T-cell (primary cell): ENCODE measurements at regions of chr17 and their contacts with region 1.

Region 1: DNA sequence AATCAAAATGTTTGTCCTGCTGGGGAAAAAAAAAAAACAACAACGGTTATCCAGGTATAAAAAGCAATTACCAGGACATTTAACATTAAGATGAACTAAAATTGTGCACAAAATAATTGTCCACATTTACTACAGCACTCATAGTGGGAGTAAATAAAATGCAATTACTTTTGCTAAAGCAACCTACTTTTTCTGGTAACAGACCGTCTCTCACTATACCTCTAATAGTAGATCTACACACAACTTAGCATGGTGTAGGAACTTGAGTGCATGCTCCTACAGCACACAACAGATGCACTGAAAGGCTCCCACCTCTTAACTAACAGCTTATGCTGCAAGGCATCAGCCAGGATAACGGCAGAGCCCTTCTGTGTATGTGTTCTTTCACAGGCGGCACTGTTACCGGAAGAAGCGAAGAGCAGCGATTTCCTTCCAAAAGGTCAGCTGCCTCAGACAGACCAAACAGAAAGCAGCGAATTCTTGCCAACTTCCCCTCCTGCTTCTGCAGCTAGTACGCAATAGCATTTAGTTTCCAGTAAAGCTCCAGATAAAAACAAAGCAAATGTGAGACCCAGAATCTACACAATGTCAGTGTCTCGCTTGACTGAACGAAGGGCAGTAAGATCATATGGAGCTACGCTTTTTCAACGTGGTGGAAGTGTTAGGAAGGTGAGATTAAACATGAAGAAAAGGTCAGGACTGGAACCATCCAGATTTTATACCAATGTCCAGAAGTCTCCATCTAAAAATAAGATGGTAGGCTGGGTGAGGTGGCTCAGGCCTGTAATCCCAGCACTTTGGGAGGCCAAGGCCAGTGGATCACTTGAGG is 27.6 kb downstream of the STAT5B start:
- DNase-seq: peak; percentile 51 to 95 (median 86)
- ATAC-seq: peak; percentile 90 to 96 (median 92)
- H3K4me3 ChIP-seq: peak overlapping the region; percentile 44 to 63
- H3K4me3 Mint-ChIP-seq: peak overlapping the region; percentile 76 to 86 (median 81)
- H3K27ac ChIP-seq: peak overlapping the region; percentile 91
- H3K27ac Mint-ChIP-seq: peak overlapping the region; percentile 97 to 99
- H3K4me1 ChIP-seq: peaks cover 46 to 50% of the 10 kb centered on the region in 2 experiments
- H3K4me1 Mint-ChIP-seq: peaks cover 74 to 79% (median 78%) of the 10 kb centered on the region in 3 donors
- H3K27me3 ChIP-seq: no peaks in the 10 kb centered on the region
- H3K27me3 Mint-ChIP-seq: no peaks in the 10 kb centered on the region

Region 2: DNA sequence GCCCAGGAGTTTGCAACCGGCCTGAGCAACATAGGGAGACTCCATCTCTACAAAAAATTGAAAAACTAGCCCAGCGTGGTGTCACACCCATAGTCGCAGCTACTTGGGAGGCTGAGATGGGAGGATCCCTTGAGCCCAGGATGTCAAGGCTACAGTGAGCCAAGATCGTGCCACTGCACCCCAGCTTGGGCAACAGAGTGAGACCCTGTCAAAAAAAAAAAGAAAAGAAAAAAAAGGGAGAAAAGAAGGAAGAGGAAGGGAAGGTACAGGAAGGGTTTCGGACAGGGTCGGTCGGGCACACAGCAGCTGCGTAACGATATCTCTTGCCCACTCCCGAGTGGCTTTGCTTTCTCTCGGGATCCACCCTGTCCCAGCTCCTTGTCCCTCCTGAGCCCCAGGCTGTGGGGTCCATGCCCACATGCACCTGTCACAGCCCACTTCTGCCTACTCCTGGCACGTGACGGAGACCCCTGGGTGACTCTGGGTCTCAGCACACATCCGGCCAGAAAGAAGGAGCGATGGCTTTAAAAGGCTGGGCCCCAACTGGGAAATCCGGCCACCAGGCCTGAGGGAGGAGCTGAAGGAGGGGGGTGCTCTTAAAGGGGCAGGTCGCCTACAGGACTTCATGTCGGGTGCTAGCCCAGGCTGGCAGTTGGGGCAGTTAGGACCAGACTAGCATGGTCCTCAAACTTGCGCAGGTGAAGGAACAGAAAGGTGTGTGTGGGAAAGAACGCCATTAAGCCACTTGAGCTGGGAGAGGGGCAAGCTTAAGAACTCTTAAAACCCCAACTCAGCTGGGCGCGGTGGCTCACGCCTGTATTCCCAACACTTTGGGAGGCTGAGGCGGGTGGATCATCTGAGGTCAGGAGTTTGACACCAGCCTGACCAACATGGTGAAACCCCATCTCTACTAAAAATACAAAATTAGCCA is 54.3 kb before region 1 on chr17 and contains the start of gene GHDC:
- CTCF ChIA-PET with region 1: interaction called in 1 of 2 experiments, 3 read pairs
- POLR2A ChIA-PET with region 1: interaction called in 1 of 2 experiments, 10 read pairs
- DNase-seq: peak; percentile 57 to 82 (median 69)
- ATAC-seq: peak; percentile 90 to 98 (median 94)
- H3K4me3 ChIP-seq: peak within 1 kb of the TSS; percentile 94 to 97
- H3K4me3 Mint-ChIP-seq: peak within 1 kb of the TSS; percentile 94 to 95 (median 94)
- H3K27ac ChIP-seq: peak within 1 kb of the TSS; percentile 69
- H3K27ac Mint-ChIP-seq: peak within 1 kb of the TSS; percentile 91 to 92
- H3K4me1 ChIP-seq: peaks cover 2 to 29% of the 10 kb centered on the region in 2 experiments
- H3K4me1 Mint-ChIP-seq: peaks cover 26 to 31% (median 31%) of the 10 kb centered on the region in 3 donors
- H3K27me3 ChIP-seq: no peaks in the 10 kb centered on the region
- H3K27me3 Mint-ChIP-seq: no peaks in the 10 kb centered on the region
- total RNA-seq, gene GHDC: 15.8 to 26.2 (median 22.5) TPM

Region 3: DNA sequence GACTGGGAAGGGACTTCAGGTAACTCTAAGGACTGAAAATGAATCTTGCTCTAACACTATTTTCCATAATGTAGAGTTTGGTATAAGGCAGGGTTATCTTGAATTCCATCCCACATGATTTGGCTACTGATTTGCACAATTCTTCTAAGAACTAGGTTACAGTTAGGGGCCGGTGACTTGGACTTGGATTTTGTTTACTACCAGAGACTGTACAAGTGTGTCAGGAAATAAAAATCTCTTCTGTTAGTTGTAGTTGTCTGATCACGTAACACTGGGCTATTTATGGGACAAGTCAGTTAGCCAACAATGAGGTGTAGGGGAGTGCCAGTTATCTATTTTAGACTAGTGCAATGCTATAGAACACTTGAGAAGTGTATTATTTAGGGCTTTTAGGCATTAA is 14.6 kb before region 1 on chr17:
- CTCF ChIA-PET with region 1: interaction called in 1 of 2 experiments, 7 read pairs
- POLR2A ChIA-PET with region 1: interaction called, 3 to 11 read pairs
- DNase-seq: no peak
- ATAC-seq: no peak
- H3K4me3 ChIP-seq: no peak overlapping the region
- H3K4me3 Mint-ChIP-seq: no peak overlapping the region
- H3K27ac ChIP-seq: no peak overlapping the region
- H3K27ac Mint-ChIP-seq: peak overlapping the region; percentile 60 to 69
- H3K4me1 ChIP-seq: peaks cover 0 to 13% of the 10 kb centered on the region in 2 experiments
- H3K4me1 Mint-ChIP-seq: peaks cover 45 to 53% (median 53%) of the 10 kb centered on the region in 3 donors
- H3K27me3 ChIP-seq: no peaks in the 10 kb centered on the region
- H3K27me3 Mint-ChIP-seq: no peaks in the 10 kb centered on the region

Region 4: DNA sequence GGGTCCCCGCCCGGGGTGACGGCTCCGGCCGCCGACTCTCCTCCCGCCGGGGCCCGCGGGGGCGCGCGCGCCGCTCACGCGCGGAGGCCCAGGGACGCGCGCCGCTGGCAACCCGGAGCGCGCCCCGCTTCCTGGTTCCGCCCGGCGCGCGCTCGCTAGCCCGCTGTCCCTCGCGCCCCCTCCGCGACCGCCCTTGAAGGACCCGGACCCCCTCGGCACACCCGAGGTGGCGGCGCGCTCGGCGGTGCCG is 27.7 kb after region 1 on chr17 and contains the start of gene STAT5B:
- CTCF ChIA-PET with region 1: interaction called in 1 of 2 experiments, 19 read pairs
- POLR2A ChIA-PET with region 1: interaction called, 24 to 147 read pairs
- DNase-seq: peak; percentile 26 to 85 (median 55)
- ATAC-seq: peak; percentile 51 to 75 (median 72)
- H3K4me3 ChIP-seq: peak within 1 kb of the TSS; percentile 84 to 92
- H3K4me3 Mint-ChIP-seq: peak within 1 kb of the TSS; percentile 95 to 100 (median 96)
- H3K27ac ChIP-seq: peak within 1 kb of the TSS; percentile 87
- H3K27ac Mint-ChIP-seq: peak within 1 kb of the TSS; percentile 95 to 98
- H3K4me1 ChIP-seq: peaks cover 12 to 27% of the 10 kb centered on the region in 2 experiments
- H3K4me1 Mint-ChIP-seq: peaks cover 45 to 59% (median 48%) of the 10 kb centered on the region in 3 donors
- H3K27me3 ChIP-seq: no peaks in the 10 kb centered on the region
- H3K27me3 Mint-ChIP-seq: no peaks in the 10 kb centered on the region
- total RNA-seq, gene STAT5B: 178 to 205 (median 186) TPM

Region 5: DNA sequence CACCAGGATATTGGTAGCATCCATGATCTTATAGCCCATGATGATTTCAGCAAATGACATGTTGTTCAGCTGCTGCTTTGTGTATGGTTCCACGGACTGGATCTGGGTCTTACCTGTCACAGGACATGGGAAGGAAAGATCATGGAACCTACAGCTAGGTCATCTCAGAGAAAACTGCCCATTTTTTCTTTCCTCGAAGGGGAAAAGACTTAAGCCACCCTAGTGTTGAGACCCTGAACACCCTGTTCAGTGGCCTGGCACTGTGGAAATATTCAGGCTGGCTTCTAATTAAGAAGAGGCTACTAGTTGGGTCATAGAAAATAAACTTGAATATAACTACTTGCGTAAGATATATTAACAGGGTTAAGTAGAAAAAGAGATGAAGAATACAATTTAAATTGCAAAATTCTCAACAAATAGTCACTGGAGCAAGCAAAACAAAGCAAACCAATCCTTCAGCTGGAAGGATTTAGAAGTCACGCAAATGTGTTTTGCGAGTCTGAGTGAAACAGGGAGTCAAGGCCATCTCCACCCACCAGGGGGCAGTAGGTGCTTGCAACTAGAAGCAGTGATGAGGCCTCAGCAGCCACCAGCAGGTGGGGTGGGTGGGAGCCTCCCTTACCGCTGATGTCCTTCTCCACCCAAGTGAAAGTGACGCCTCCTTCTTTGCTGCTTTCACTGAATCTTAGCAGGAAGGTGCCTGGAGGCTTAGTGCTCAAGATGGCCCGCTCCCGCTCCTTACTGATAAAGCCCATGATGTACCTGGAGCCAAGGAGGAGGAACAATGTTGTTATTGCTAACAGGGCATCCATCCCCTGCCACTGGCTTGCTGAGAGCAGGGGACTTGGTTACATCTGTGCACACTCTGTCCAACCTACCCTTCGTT is 74.1 kb after region 1 on chr17:
- CTCF ChIA-PET with region 1: no interaction called
- POLR2A ChIA-PET with region 1: no interaction called
- DNase-seq: peak; percentile 87 to 98 (median 94)
- ATAC-seq: peak; percentile 91 to 97 (median 94)
- H3K4me3 ChIP-seq: no peak overlapping the region
- H3K4me3 Mint-ChIP-seq: no peak overlapping the region
- H3K27ac ChIP-seq: peak overlapping the region; percentile 13
- H3K27ac Mint-ChIP-seq: peak overlapping the region; percentile 82 to 83
- H3K4me1 ChIP-seq: peaks cover 15 to 28% of the 10 kb centered on the region in 2 experiments
- H3K4me1 Mint-ChIP-seq: peaks cover 41 to 44% (median 43%) of the 10 kb centered on the region in 3 donors
- H3K27me3 ChIP-seq: no peaks in the 10 kb centered on the region
- H3K27me3 Mint-ChIP-seq: no peaks in the 10 kb centered on the region

Region 6: GRCh38 chr17:42388381-42389134 is 140.0 kb after region 1 on chr17 and contains the start of gene STAT3:
- CTCF ChIA-PET with region 1: no interaction called
- POLR2A ChIA-PET with region 1: interaction called in 1 of 2 experiments, 14 read pairs
- DNase-seq: peak; percentile 99 to 100 (median 100)
- ATAC-seq: peak; percentile 83 to 93 (median 92)
- H3K4me3 ChIP-seq: peak within 1 kb of the TSS; percentile 75 to 81
- H3K4me3 Mint-ChIP-seq: peak within 1 kb of the TSS; percentile 90 to 95 (median 94)
- H3K27ac ChIP-seq: peak within 1 kb of the TSS; percentile 98
- H3K27ac Mint-ChIP-seq: peak within 1 kb of the TSS; percentile 100
- H3K4me1 ChIP-seq: peaks cover 13 to 20% of the 10 kb centered on the region in 2 experiments
- H3K4me1 Mint-ChIP-seq: peaks cover 48 to 52% (median 50%) of the 10 kb centered on the region in 3 donors
- H3K27me3 ChIP-seq: no peaks in the 10 kb centered on the region
- H3K27me3 Mint-ChIP-seq: no peaks in the 10 kb centered on the region
- total RNA-seq, gene STAT3: 113 to 242 (median 129) TPM